ENCODE measurements at regions of chr18 and their contacts with region 1.

Region 1: DNA sequence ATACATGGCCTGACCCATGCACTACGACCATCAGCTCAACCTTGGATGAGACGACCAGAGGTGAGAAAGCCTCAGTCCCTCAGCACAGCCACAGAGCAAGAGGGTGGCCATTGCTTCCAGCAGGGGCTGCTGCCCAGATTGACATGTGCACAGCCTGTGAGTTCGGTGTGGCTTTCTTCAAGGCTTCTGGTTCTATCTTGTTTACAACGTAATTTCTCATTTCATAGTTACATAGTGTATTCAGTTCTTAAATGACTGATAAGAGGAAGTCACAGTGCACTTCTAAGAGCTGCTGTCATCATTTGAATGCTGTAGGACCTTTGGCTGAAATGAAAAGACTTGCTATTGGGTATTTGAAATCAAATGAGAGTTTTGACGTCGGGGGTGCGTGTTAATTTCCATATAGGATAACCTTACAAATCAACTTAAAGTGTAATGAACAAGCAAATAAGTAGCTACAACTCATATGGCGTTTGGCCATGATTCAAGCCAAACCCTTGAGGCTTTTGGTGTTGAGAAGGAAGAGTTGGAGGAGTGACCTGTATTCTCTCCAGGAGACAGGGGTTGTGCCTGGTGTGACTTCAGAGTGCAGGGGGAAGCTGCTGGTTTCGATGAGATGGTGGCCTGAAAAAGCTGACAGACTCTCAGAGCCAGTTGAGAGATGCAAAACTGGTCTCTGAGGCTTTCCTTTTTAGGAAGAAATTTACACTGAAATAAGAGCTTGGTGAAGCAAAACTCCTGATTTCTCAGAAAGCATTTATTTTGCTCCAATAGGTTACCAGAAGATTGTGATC is 51.0 kb downstream of the TSHZ1 start:
- DNase-seq: peak; percentile 41
- ATAC-seq: peak; percentile 90
- H3K4me3 ChIP-seq: no peak overlapping the region
- H3K27ac ChIP-seq: peak overlapping the region; percentile 65
- H3K4me1 ChIP-seq: peaks cover 26% of the 10 kb centered on the region
- H3K27me3 ChIP-seq: no peaks in the 10 kb centered on the region
- CTCF ChIP-seq: no peak
- EP300 ChIP-seq: no peak
- POLR2A ChIP-seq: peak; percentile 65
- RAD21 ChIP-seq: no peak

Region 2: DNA sequence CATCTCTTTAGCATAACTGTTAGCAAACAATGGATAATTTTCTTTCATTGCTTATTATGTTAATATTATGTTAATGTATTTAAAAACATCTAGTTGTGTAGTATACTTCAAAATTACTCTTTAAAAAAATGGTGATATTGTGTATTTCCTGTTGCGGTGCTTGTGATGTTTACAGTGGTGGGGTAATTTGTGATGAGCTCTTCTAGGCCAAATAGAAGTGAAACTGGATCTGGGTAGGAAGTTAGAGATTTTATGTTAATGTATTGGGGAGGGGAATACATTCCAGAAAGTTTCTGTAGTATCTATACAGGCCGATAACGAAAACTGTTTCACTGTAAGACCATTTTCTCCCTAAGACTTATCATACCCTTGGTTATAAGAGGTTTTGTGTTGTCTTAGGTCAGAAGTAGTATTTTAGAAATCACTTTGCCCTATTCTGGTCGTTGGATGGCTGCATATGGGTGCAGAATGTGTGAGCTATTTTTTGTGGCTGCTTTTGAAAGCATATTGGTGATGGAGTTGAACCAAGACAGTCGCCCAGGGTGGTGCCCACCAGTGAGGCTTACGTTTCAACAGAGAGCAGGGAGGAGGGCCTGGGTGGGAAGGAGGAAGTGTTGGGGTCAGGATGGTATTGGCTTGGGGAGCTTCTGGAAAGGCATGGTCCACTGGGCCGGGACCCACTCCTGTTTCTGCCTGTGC is 45.3 kb before region 1 on chr18:
- CTCF ChIA-PET with region 1: no interaction called
- POLR2A ChIA-PET with region 1: no interaction called
- RAD21 ChIA-PET with region 1: no interaction called
- SMC1A ChIA-PET with region 1: interaction called, 5 read pairs
- in situ Hi-C with region 1: no loop called
- intact Hi-C with region 1: loop called (anchors 5 kb)
- DNase-seq: no peak
- ATAC-seq: peak; percentile 41
- H3K4me3 ChIP-seq: no peak overlapping the region
- H3K27ac ChIP-seq: 0 out of 2 replicates have a peak overlapping the region, but pooled peaks have one; percentile 4
- H3K4me1 ChIP-seq: peaks cover 10% of the 10 kb centered on the region; the same call in 1 of the 2 replicates
- H3K27me3 ChIP-seq: no peaks in the 10 kb centered on the region
- CTCF ChIP-seq: no peak
- EP300 ChIP-seq: no peak
- POLR2A ChIP-seq: no peak
- RAD21 ChIP-seq: no peak

Region 3: GRCh38 chr18:75244351-75245313 is 17.0 kb before region 1 on chr18:
- CTCF ChIA-PET with region 1: interaction called, 8 read pairs
- POLR2A ChIA-PET with region 1: no interaction called
- RAD21 ChIA-PET with region 1: interaction called, 3 read pairs
- SMC1A ChIA-PET with region 1: interaction called, 10 read pairs
- in situ Hi-C with region 1: no loop called
- intact Hi-C with region 1: no loop called
- DNase-seq: no peak
- ATAC-seq: peak; percentile 45; the same call in 1 of the 3 replicates
- H3K4me3 ChIP-seq: no peak overlapping the region
- H3K27ac ChIP-seq: no peak overlapping the region
- H3K4me1 ChIP-seq: peaks cover 12% of the 10 kb centered on the region
- H3K27me3 ChIP-seq: no peaks in the 10 kb centered on the region
- CTCF ChIP-seq: peak; percentile 6 to 38 (median 36); a peak in 2 of 6 replicates
- EP300 ChIP-seq: no peak
- POLR2A ChIP-seq: no peak
- RAD21 ChIP-seq: peak; percentile 53

Region 4: GRCh38 chr18:75341267-75341666 is 79.6 kb after region 1 on chr18:
- CTCF ChIA-PET with region 1: no interaction called
- POLR2A ChIA-PET with region 1: no interaction called
- RAD21 ChIA-PET with region 1: no interaction called
- SMC1A ChIA-PET with region 1: no interaction called
- in situ Hi-C with region 1: no loop called
- intact Hi-C with region 1: no loop called
- DNase-seq: no peak
- ATAC-seq: no peak
- H3K4me3 ChIP-seq: no peak overlapping the region
- H3K27ac ChIP-seq: no peak overlapping the region
- H3K4me1 ChIP-seq: no peaks in the 10 kb centered on the region
- H3K27me3 ChIP-seq: no peaks in the 10 kb centered on the region
- CTCF ChIP-seq: no peak
- EP300 ChIP-seq: no peak
- POLR2A ChIP-seq: no peak
- RAD21 ChIP-seq: no peak

Measured in GM12878 (cell line).